Right ventricle myocardium inferior (tissue), 1 donor: ENCODE measurements at regions of chr15 and their contacts with region 1.

Region 1: DNA sequence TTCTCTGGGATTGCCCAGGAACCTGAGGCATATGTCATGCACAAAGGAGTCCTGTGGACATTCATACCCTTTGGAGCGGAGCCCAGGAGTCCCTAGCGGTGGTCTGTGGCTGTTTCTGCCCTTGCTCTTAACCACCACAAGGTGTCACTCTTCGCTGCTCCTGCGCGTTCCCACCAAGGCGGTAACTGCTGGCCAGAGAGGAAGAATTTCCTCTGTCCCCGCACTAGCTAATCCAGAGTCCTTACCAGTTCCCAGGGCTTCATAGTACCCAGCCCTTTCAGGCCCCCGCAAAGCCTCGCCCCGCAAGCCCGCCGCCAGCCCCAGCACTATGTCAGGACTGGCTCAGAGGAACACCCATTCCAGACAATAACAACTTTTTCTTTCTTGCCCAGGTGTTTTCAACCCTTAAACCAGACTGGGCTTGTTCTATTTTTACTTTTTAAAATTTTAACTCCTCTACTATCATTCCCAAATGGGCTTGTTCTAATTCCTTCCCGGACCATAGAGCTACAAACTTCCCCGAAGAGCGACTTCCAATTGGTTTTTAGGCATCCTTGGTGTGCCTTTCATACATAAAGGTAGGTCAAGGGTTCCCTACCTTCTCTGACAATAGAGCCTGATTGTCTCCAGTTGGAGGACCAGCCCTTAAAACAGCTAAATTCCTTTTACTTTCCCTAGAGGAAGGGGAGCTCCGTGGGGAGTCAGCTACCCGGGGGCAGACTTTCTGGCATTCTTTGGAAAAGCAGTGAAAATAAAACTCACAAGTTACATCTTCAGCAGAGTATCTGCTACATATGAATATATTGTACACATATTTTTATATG is 31.8 kb upstream of the ZNF774 start:
- DNase-seq: peak; percentile 87
- ATAC-seq: peak; percentile 82

Region 2: DNA sequence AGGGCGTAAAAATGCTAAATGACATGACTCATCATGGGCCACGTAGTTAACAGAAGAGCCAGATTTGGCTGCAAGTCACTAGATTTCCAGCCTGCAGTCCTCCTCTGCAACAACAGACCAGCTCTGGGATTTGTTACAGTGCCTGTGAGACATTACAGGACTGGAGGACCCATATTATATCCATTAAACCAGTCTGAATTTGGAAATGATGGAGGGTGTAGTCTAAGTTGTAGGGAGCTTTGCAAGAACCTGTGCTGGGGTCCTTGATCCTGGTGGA is 42.6 kb after region 1 on chr15:
- intact Hi-C with region 1: loop called (anchors 5 kb)
- DNase-seq: no peak
- ATAC-seq: peak; percentile 70

Region 3: GRCh38 chr15:90482124-90483011 is 162.1 kb after region 1 on chr15:
- intact Hi-C with region 1: loop called (anchors 1 kb)
- DNase-seq: no peak
- ATAC-seq: peak; percentile 54

Region 4: GRCh38 chr15:90598031-90598577 is 277.8 kb after region 1 on chr15:
- intact Hi-C with region 1: loop called (anchors 10 kb)
- DNase-seq: peak; percentile 65
- ATAC-seq: peak; percentile 52

Region 5: DNA sequence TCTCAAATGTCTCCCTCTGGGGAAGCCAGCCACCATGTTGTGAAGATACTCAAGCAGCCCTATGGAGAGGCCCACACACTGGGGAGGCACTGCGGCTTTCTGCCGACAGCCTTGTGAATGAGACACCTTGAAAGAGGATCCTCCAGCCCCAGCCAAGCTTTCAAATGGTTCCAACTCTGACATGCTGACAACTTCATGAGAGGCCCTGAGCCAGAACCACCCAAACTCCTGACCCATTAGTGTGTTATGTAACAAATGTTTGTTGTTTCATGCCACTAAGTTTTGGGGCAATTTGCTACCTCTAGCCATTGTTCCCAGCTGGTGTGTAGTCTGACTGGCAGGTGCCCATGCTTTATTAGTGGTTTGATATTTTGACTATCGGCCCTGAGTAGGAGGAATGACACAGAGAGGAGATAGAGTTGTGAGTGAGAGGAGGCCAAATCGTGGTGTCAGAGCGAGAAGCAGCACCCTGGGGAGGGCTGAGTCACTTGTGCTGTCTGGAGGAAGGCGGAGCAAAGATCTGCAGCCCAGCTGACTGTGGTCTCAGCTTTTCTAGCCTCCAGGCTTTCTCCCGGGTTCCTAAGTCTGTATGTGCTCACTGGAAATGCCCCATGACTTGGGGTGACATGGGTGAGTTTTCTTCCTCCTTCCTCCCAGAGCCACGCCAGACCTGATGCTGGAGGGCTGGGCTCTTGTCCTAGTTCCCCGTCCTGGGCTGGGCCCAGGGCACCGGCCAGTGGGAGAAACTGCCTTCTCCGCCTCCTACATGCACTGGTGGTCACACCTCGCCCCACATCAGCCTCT is 340.1 kb after region 1 on chr15:
- intact Hi-C with region 1: no loop called
- DNase-seq: peak; percentile 82
- ATAC-seq: peak; percentile 89

Region 6: GRCh38 chr15:90691982-90692773 is 371.9 kb after region 1 on chr15:
- intact Hi-C with region 1: loop called (anchors 5 kb)
- DNase-seq: no peak
- ATAC-seq: no peak